Activated naive CD4-positive, alpha-beta T cell treated with anti-CD3 and anti-CD28 coated beads for 36 hours (primary cell): ENCODE measurements at regions of chr20 and their contacts with region 1.

Region 1: DNA sequence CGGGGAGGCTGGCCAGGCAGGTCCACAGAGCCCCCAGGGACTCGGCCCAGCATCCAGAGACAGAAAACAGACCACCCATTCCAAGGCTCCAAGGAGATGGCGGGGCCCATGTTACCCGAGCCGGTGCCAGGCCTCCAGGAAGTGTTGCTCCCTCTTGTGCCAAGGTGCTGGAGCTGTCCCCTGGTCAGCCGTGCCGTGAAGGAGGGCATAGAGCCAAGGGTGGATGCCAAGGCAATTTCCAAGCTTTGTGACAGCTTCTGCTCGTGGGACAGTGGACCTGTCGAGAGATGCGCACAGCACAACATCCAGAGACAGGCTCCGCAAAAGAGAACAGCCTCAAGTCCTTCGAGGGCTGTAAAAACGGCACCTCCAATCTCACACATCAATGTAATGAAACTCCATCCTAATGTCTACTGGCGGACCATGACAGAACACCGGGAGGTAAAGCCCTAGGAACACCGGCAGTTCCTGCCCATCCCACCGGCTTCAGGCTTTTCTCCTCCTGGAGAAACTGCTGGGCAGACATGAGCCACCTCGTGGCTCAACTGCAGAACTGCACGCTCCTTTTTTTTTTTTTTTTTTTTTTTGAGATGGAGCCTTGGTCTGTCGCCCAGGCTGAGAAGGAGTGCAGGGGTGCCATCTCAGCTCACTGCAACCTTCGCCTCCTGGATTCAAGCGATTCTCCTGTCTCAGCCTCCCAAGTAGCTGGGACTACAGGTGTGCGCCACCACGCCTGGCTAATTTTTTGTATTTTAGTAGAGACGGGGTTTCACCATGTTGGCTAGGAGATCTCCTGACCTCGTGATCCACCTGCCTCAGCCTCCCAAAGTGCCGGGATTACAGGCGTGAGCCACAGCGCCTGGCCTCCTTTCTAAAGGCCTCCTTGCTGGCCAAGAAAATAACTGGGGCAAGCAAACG is 30.9 kb upstream of the AVP start:
- DNase-seq: no peak
- H3K4me3 Mint-ChIP-seq: no peak overlapping the region
- H3K27ac Mint-ChIP-seq: no peak overlapping the region
- H3K4me1 Mint-ChIP-seq: peaks cover 13% of the 10 kb centered on the region
- H3K27me3 Mint-ChIP-seq: no peaks in the 10 kb centered on the region

Region 2: GRCh38 chr20:3051385-3052019 is 63.9 kb before region 1 on chr20:
- CTCF ChIA-PET with region 1: interaction called, 19 read pairs
- intact Hi-C with region 1: loop called (anchors 1 kb)
- DNase-seq: no peak
- H3K4me3 Mint-ChIP-seq: no peak overlapping the region
- H3K27ac Mint-ChIP-seq: no peak overlapping the region
- H3K4me1 Mint-ChIP-seq: peaks cover 16% of the 10 kb centered on the region
- H3K27me3 Mint-ChIP-seq: no peaks in the 10 kb centered on the region

Region 3: DNA sequence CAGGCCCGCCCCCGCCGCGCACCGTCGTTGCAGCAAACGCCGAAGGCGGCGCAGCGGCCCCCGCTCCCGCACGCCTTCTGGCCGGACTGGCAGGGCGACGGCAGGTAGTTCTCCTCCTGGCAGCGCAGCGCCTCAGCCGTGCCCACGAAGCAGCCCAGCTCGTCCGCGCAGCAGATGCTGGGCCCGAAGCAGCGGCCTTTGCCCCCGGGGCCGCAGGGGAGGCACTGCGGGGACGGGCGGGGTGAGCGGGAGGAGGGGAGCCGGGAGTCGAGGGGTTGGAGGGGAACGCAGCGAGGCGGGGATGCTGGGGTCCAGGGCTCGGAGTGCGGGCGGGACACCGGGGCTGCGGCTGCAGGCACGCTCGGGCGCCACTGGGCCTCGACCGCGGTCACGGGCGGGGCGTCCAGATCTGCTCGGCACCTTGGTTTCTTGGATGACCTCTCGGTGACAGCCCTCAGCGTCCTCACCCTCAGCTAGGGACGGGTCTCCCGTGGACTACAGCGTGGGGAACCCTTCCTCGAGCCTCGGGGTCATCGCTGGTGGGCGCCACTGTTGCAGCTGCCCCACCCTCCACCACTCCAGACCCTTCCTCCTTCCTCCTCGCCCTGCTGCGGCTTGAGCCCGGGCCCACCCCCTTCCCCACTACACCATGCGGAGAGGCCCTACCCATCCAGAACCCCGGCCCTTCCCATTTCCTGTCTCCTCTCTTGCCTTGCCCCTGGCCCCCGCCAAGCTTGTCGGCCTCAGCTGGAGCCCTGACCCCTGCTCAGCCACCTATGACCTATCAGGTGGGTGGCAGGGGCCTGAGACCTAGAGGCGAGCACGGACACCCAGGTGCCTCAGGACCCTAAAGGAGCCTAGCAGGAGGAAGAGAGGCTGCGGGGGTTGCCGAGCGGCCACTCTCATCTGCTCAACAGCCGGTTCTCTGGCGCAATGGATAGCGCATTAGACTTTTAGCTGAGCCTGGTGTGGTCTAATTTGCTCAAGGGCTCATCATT is 32.2 kb before region 1 on chr20:
- CTCF ChIA-PET with region 1: no interaction called
- intact Hi-C with region 1: no loop called
- DNase-seq: no peak
- H3K4me3 Mint-ChIP-seq: peak overlapping the region; percentile 44
- H3K27ac Mint-ChIP-seq: no peak overlapping the region
- H3K4me1 Mint-ChIP-seq: peaks cover 7% of the 10 kb centered on the region
- H3K27me3 Mint-ChIP-seq: peaks cover 30% of the 10 kb centered on the region

Region 4: DNA sequence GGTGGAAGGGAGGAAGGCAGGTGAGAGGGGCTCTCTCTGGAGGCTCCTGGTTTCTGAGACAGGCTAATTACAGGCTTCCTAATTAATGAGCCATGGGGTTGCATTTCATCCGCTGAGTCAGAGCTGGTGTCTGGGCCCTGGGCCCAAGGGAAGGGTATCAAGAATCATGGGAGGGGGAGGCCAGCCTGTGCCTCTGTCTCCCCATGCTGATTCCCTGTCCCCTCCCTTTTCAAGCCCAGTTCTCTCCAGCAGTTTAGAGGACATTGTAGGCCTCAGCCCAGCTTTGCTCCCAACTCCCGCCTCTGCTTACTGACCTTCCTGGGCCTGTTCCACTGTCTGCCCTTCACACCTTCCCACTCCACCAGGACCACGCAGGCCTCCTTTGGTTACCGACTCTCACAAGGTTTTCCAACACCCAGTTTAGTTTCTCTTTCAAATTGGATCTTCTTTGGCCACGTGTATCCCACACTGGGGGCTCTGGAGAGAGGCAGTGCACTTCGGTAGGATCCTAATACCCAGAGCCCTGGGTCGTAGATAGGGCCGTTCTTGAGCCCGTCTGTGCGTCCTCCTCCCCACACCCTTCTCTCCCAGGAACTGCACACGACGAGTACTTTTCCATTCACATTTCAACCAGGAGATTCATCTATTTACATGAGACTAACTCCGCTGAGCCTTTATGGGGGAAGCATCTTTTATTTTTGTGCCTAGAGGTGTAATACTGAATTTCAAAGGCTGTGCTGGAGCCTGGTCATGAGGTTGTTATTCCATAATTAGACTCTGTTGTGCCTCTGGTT is 12.7 kb before region 1 on chr20:
- CTCF ChIA-PET with region 1: interaction called, 13 read pairs
- intact Hi-C with region 1: no loop called
- DNase-seq: no peak
- H3K4me3 Mint-ChIP-seq: no peak overlapping the region
- H3K27ac Mint-ChIP-seq: no peak overlapping the region
- H3K4me1 Mint-ChIP-seq: peaks cover 23% of the 10 kb centered on the region
- H3K27me3 Mint-ChIP-seq: no peaks in the 10 kb centered on the region

Region 5: GRCh38 chr20:3173610-3174441 is 58.4 kb after region 1 on chr20:
- CTCF ChIA-PET with region 1: interaction called, 3 read pairs
- intact Hi-C with region 1: loop called (anchors 5 kb)
- DNase-seq: peak; percentile 89
- H3K4me3 Mint-ChIP-seq: peak overlapping the region; percentile 83
- H3K27ac Mint-ChIP-seq: no peak overlapping the region
- H3K4me1 Mint-ChIP-seq: peaks cover 12% of the 10 kb centered on the region
- H3K27me3 Mint-ChIP-seq: peaks cover 11% of the 10 kb centered on the region

Region 6: GRCh38 chr20:3312940-3313682 is 197.7 kb after region 1 on chr20:
- CTCF ChIA-PET with region 1: interaction called, 4 read pairs
- intact Hi-C with region 1: loop called (anchors 1 kb)
- DNase-seq: no peak
- H3K4me3 Mint-ChIP-seq: no peak overlapping the region
- H3K27ac Mint-ChIP-seq: no peak overlapping the region
- H3K4me1 Mint-ChIP-seq: no peaks in the 10 kb centered on the region
- H3K27me3 Mint-ChIP-seq: no peaks in the 10 kb centered on the region

Region 7: GRCh38 chr20:4457566-4458543 is 1342.4 kb after region 1 on chr20:
- CTCF ChIA-PET with region 1: no interaction called
- intact Hi-C with region 1: no loop called
- DNase-seq: no peak
- H3K4me3 Mint-ChIP-seq: no peak overlapping the region
- H3K27ac Mint-ChIP-seq: no peak overlapping the region
- H3K4me1 Mint-ChIP-seq: no peaks in the 10 kb centered on the region
- H3K27me3 Mint-ChIP-seq: peaks cover 3% of the 10 kb centered on the region